ENCODE measurements at regions of chr19 and their contacts with region 1.

Region 1: GRCh38 chr19:35154525-35155406 is at the start of gene FXYD5:
- DNase-seq: peak; percentile 48 to 82 (median 76)
- ATAC-seq: peak; percentile 75
- H3K4me3 ChIP-seq: peak within 1 kb of the TSS; percentile 84 to 99
- H3K4me3 Mint-ChIP-seq: peak within 1 kb of the TSS; percentile 100
- H3K27ac ChIP-seq: peak within 1 kb of the TSS; percentile 89 to 93
- H3K27ac Mint-ChIP-seq: peak within 1 kb of the TSS; percentile 98
- H3K4me1 ChIP-seq: peaks cover 37% of the 10 kb centered on the region
- H3K4me1 Mint-ChIP-seq: peaks cover 53% of the 10 kb centered on the region
- H3K27me3 ChIP-seq: no peaks in the 10 kb centered on the region
- H3K27me3 Mint-ChIP-seq: no peaks in the 10 kb centered on the region
- CTCF ChIP-seq: no peak
- total RNA-seq, gene FXYD5: 426 to 440 TPM

Region 2: DNA sequence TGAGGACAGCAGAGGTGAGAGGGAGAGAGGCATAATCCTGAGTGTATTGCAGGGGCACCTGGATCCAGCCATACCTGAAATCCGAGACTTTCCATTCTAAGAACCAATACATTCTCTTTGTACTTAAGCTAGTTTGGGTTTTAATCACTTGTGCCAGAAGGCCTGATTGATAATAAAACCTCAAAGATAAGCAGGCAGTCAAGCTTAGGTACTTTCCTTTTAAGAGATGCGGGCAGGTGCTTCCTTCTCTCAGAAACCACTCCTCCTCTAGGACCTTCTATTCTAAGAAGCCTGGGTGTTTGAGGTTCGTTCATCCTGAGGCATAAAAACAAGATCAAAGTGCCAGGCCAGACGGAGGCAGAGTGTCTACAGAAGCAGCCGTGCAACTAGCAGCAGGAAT is 51.6 kb after region 1 on chr19:
- CTCF ChIA-PET with region 1: interaction called, 8 read pairs
- POLR2A ChIA-PET with region 1: interaction called, 7 read pairs
- intact Hi-C with region 1: loop called (anchors 1 kb)
- DNase-seq: peak; percentile 23 to 91 (median 61)
- ATAC-seq: peak; percentile 28
- H3K4me3 ChIP-seq: peak overlapping the region in 1 of 2 experiments; percentile 9
- H3K4me3 Mint-ChIP-seq: peak overlapping the region; percentile 42
- H3K27ac ChIP-seq: peak overlapping the region; percentile 66 to 75
- H3K27ac Mint-ChIP-seq: peak overlapping the region; percentile 98
- H3K4me1 ChIP-seq: peaks cover 70% of the 10 kb centered on the region
- H3K4me1 Mint-ChIP-seq: peaks cover 69% of the 10 kb centered on the region
- H3K27me3 ChIP-seq: no peaks in the 10 kb centered on the region
- H3K27me3 Mint-ChIP-seq: no peaks in the 10 kb centered on the region
- CTCF ChIP-seq: no peak

Region 3: DNA sequence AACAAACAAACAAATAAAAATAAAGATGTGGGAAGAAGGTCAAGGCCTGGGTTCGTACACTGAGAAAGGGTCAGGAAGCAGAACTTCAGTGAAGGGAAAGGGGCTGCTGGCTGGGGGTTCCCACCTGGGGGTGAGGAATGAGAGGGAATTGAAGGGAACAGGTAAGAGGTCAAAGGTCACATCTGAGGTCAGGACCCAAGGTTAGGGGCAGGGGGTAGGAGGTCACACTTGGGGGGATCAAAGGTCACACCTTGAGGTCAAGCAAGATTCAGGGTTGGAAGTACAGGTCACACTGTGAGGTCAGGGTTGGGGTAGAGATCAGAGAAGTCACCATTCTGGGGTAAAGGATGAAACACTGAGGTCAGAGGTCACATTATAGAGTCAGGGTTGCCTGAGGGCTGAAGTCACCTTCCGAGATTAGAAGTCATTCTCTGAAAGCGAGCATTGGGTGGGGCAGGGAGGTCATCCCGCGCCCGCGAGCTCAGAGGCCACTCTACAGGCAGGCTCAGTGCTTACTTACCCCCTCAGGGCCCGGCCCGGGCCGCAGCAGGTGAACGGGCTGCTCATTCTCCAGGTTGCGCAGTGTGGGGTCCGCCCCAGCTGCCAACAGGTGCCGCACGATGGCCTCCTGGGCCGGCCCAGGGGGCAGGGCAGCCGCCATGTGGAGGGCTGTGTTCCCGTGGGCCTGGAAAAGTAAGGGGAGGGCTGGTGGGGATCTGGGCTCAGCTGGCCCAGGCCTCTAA is 734.8 kb after region 1 on chr19:
- CTCF ChIA-PET with region 1: no interaction called
- POLR2A ChIA-PET with region 1: no interaction called
- intact Hi-C with region 1: no loop called
- DNase-seq: no peak
- ATAC-seq: no peak
- H3K4me3 ChIP-seq: no peak overlapping the region
- H3K4me3 Mint-ChIP-seq: no peak overlapping the region
- H3K27ac ChIP-seq: no peak overlapping the region
- H3K27ac Mint-ChIP-seq: no peak overlapping the region
- H3K4me1 ChIP-seq: no peaks in the 10 kb centered on the region
- H3K4me1 Mint-ChIP-seq: peaks cover 3% of the 10 kb centered on the region
- H3K27me3 ChIP-seq: no peaks in the 10 kb centered on the region
- H3K27me3 Mint-ChIP-seq: no peaks in the 10 kb centered on the region
- CTCF ChIP-seq: no peak